ENCODE measurements at regions of chr16 and their contacts with region 1.

Region 1: DNA sequence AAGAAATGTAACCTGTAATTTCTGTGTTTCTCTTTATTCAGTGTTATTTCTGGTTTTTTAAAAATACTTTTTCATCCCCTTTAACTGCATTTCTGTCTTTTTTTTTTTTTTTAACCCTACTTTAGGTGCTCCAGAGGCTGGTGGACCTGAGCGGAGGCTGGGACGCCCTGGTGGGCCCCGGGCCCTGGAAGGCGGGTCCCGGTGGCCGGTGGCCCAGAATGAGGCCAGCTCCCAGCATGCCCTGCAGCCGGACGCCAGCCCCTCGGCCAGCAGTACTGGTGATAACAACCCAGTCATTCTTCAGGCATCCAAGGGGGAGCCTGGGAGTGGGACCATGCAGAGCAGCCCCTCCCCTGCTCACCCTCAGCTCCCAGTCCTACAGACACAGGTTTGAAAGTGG is 1.5 kb downstream of the SRCAP start:
- ATAC-seq: no peak
- H3K4me3 ChIP-seq: no peak overlapping the region
- H3K27ac ChIP-seq: no peak overlapping the region
- H3K4me1 ChIP-seq: peaks cover 5 to 8% of the 10 kb centered on the region in 2 donors

Region 2: DNA sequence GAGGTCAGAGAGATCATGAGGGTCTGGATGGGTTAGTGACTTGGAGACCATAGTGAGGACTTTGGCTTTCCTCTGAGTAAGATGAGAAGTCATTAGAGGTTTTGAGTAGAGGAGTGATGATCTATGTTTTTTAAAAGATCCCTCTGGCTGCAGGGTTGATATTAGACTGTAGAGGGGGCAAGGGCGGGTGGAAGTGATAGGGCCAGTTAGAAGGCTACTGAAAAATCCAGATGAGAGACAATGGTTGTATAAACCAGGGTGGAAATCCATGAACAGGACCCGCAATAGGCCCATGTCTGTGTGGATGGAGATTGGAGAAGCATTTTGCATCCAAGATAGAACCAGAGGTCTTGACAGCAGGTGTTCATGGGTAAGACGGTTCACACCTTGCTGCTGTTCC is 218.1 kb before region 1 on chr16:
- in situ Hi-C with region 1: no loop called
- ATAC-seq: peak in 3 of 8 experiments; percentile 57 to 75 (median 67)
- H3K4me3 ChIP-seq: no peak overlapping the region
- H3K27ac ChIP-seq: no peak overlapping the region
- H3K4me1 ChIP-seq: no peaks in the 10 kb centered on the region

Region 3: GRCh38 chr16:30758988-30759521 is 58.6 kb after region 1 on chr16:
- in situ Hi-C with region 1: loop called in 1 of 9 experiments (anchors 10 kb)
- ATAC-seq: no peak
- H3K4me3 ChIP-seq: no peak overlapping the region
- H3K27ac ChIP-seq: no peak overlapping the region
- H3K4me1 ChIP-seq: peaks cover 15 to 18% of the 10 kb centered on the region in 2 donors

Measured in motor neuron (in vitro differentiated cells).